Stomach (tissue), 19 donors: ENCODE measurements at regions of chr14 and their contacts with region 1.

Region 1: GRCh38 chr14:89973234-89973823 is 17.6 kb downstream of the TDP1 start:
- DNase-seq: peak; percentile 60 to 87
- H3K4me3 ChIP-seq: no peak overlapping the region
- H3K27ac ChIP-seq: no peak overlapping the region
- H3K4me1 ChIP-seq: no peaks in the 10 kb centered on the region
- H3K27me3 ChIP-seq: no peaks in the 10 kb centered on the region
- CTCF ChIP-seq: peak in 5 of 7 experiments; percentile 46 to 79 (median 75)
- EP300 ChIP-seq: no peak
- POLR2A ChIP-seq: no peak

Region 2: GRCh38 chr14:90061846-90062794 is 88.8 kb after region 1 on chr14 and contains the start of gene KCNK13:
- intact Hi-C with region 1: no loop called
- DNase-seq: peak in 1 of 2 donors; percentile 60
- H3K4me3 ChIP-seq: peak within 1 kb of the TSS; percentile 43 to 63 (median 53)
- H3K27ac ChIP-seq: no peak within 1 kb of the TSS
- H3K4me1 ChIP-seq: peaks cover 24 to 34% (median 30%) of the 10 kb centered on the region in 4 donors
- H3K27me3 ChIP-seq: peaks cover 14 to 91% (median 45%) of the 10 kb centered on the region in 3 donors
- CTCF ChIP-seq: no peak
- EP300 ChIP-seq: no peak
- POLR2A ChIP-seq: no peak
- total RNA-seq, gene KCNK13: 0.55 to 2.5 TPM in 2 of 5 donors, not detected in the others

Region 3: GRCh38 chr14:90235179-90235976 is 262.0 kb after region 1 on chr14:
- intact Hi-C with region 1: loop called (anchors 10 kb)
- DNase-seq: peak; percentile 76
- H3K4me3 ChIP-seq: no peak overlapping the region
- H3K27ac ChIP-seq: no peak overlapping the region
- H3K4me1 ChIP-seq: peaks cover 0 to 8% (median 2%) of the 10 kb centered on the region in 4 donors
- H3K27me3 ChIP-seq: peaks cover 0 to 23% (median 0%) of the 10 kb centered on the region in 3 donors
- CTCF ChIP-seq: peak in 5 of 7 experiments; percentile 86 to 96 (median 90)
- EP300 ChIP-seq: no peak
- POLR2A ChIP-seq: no peak